CD4-positive, alpha-beta T cell (primary cell): ENCODE measurements at regions of chr20 and their contacts with region 1.

Region 1: DNA sequence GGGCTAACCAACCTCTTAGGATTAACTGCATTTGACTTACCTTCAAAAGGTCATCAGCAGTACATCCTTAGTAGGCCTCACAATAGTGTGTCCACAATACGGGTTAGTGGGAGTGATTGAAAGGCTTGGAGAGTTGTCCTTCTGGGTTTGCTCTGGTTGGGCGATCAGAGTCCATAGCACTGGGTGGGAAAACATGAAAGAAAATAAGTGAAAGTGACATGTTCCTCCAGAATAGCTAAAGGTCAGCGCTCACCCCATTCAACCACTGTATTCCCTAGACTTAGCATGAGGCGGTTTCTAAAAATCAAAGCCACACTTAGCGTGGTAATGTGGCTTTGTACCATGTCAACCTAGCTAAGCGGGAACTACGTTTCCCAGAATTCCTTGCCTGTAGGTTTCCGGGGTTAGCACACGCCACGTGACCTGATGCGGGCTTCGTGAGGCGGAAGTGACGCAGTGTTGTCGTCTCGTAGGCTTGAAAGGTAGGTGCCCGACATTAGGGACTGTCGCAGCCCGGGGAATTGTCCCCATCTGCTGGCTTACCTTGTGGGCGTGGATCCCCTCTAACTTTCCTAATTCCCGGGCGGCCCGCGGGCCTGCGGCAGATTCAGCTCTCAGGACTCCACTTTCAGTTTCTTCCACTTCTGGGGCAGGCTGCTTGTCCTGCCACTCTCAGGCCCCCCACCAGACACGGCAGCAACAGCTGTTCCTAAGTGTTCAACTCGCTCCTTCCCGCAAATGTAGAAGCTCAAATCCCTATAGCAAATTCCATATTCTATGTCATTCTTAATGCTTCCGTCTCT is 19.8 kb upstream of the SCP2D1 start:
- DNase-seq: peak; percentile 75 to 98 (median 82)
- ATAC-seq: peak; percentile 96
- H3K4me3 ChIP-seq: peak overlapping the region; percentile 75
- H3K4me3 Mint-ChIP-seq: peak overlapping the region; percentile 92
- H3K27ac ChIP-seq: peak overlapping the region; percentile 85 to 93
- H3K27ac Mint-ChIP-seq: peak overlapping the region; percentile 100
- H3K4me1 ChIP-seq: peaks cover 11% of the 10 kb centered on the region
- H3K4me1 Mint-ChIP-seq: peaks cover 28% of the 10 kb centered on the region
- H3K27me3 ChIP-seq: peaks cover 0 to 13% of the 10 kb centered on the region in 2 experiments
- H3K27me3 Mint-ChIP-seq: peaks cover 40% of the 10 kb centered on the region
- CTCF ChIP-seq: no peak

Region 2: DNA sequence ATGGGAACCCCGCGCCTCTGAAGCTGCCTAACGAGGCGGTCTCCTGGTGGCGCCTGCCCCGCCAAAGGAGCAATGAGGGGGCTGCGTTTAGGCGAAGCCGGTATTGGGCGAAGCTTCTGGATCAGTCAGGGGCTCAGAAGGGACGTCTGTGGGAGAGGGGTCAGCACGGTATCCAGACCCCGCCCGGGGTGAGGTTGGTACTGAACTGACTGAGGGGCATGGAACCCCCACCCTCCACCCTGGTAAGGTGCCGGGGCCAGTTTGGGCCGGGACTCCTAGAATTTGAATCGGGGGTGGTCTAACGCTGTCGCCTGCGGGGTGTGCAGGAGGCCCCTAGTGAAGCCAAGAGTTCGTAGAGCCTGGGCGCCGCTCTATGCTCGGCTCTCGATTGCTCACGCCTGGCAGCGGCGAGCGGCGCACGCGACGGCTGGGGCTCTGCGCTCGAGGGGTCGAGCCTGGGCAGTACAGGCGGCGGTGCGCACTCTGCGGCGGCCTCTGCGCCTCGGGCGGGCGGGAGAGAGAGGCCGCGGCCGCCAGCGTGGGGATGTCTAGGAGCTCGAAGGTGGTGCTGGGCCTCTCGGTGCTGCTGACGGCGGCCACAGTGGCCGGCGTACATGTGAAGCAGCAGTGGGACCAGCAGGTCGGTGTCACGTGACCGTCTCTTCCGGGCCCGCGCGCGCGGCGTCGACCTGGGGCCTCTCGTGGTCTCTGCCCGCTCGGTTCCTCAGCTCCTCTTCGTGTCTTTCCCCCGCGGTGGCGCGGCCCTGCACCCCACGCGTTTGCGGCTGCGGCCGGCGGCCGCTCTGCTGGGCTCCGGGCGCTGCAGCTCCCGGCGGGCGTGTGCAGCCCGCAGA is 656.2 kb before region 1 on chr20 and contains the starts of genes KAT14 and PET117:
- CTCF ChIA-PET with region 1: no interaction called
- POLR2A ChIA-PET with region 1: interaction called, 11 read pairs
- intact Hi-C with region 1: loop called in 1 of 2 experiments (anchors 5 kb)
- DNase-seq: peak; percentile 83 to 96 (median 91)
- ATAC-seq: peak; percentile 92
- H3K4me3 ChIP-seq: peak within 1 kb of the TSS; percentile 81
- H3K4me3 Mint-ChIP-seq: peak within 1 kb of the TSS; percentile 96
- H3K27ac ChIP-seq: peak within 1 kb of the TSS; percentile 72 to 75
- H3K27ac Mint-ChIP-seq: peak within 1 kb of the TSS; percentile 95
- H3K4me1 ChIP-seq: peaks cover 32% of the 10 kb centered on the region
- H3K4me1 Mint-ChIP-seq: peaks cover 32% of the 10 kb centered on the region
- H3K27me3 ChIP-seq: no peaks in the 10 kb centered on the region
- H3K27me3 Mint-ChIP-seq: no peaks in the 10 kb centered on the region
- CTCF ChIP-seq: no peak
- total RNA-seq, gene KAT14: 8.5 to 9.4 TPM
- total RNA-seq, gene PET117: 13.6 to 14.6 TPM

Region 3: GRCh38 chr20:18507218-18508021 is 286.4 kb before region 1 on chr20 and contains the start of gene SEC23B:
- CTCF ChIA-PET with region 1: no interaction called
- POLR2A ChIA-PET with region 1: interaction called, 26 read pairs
- intact Hi-C with region 1: loop called (anchors 2 to 5 kb)
- DNase-seq: peak; percentile 94 to 99 (median 98)
- ATAC-seq: peak; percentile 81
- H3K4me3 ChIP-seq: peak within 1 kb of the TSS; percentile 86
- H3K4me3 Mint-ChIP-seq: peak within 1 kb of the TSS; percentile 98
- H3K27ac ChIP-seq: peak within 1 kb of the TSS; percentile 94 to 99
- H3K27ac Mint-ChIP-seq: peak within 1 kb of the TSS; percentile 100
- H3K4me1 ChIP-seq: peaks cover 26% of the 10 kb centered on the region
- H3K4me1 Mint-ChIP-seq: peaks cover 52% of the 10 kb centered on the region
- H3K27me3 ChIP-seq: peaks cover 0 to 2% of the 10 kb centered on the region in 2 experiments
- H3K27me3 Mint-ChIP-seq: no peaks in the 10 kb centered on the region
- CTCF ChIP-seq: no peak
- total RNA-seq, gene SEC23B: 29.2 to 32.8 TPM

Region 4: GRCh38 chr20:18694071-18694470 is 99.8 kb before region 1 on chr20:
- CTCF ChIA-PET with region 1: no interaction called
- POLR2A ChIA-PET with region 1: no interaction called
- intact Hi-C with region 1: no loop called
- DNase-seq: no peak
- ATAC-seq: no peak
- H3K4me3 ChIP-seq: no peak overlapping the region
- H3K4me3 Mint-ChIP-seq: no peak overlapping the region
- H3K27ac ChIP-seq: no peak overlapping the region
- H3K27ac Mint-ChIP-seq: no peak overlapping the region
- H3K4me1 ChIP-seq: no peaks in the 10 kb centered on the region
- H3K4me1 Mint-ChIP-seq: no peaks in the 10 kb centered on the region
- H3K27me3 ChIP-seq: no peaks in the 10 kb centered on the region
- H3K27me3 Mint-ChIP-seq: no peaks in the 10 kb centered on the region
- CTCF ChIP-seq: no peak

Region 5: DNA sequence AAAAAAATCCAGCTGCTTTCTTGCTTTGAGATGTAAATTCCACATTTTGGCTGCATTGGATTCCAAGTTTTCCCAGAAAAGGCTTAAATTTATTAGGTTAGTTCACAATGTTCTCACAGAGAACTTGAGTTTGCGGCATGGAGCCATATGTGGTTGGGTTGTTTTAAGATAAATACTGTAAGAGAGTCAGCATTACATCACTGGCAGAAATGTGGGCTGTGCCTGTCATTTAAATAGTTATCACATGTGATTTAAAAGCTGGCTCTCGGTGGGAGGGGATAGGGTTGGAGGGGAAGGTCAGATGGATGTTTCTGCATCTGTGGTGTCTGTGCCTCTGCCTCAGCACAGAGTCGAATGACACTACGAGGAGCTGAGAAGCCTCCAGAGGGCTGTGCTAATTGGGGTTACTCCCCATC is 54.1 kb before region 1 on chr20:
- CTCF ChIA-PET with region 1: no interaction called
- POLR2A ChIA-PET with region 1: no interaction called
- intact Hi-C with region 1: no loop called
- DNase-seq: no peak
- ATAC-seq: no peak
- H3K4me3 ChIP-seq: no peak overlapping the region
- H3K4me3 Mint-ChIP-seq: no peak overlapping the region
- H3K27ac ChIP-seq: no peak overlapping the region
- H3K27ac Mint-ChIP-seq: no peak overlapping the region
- H3K4me1 ChIP-seq: peaks cover 24% of the 10 kb centered on the region
- H3K4me1 Mint-ChIP-seq: peaks cover 7% of the 10 kb centered on the region
- H3K27me3 ChIP-seq: no peaks in the 10 kb centered on the region
- H3K27me3 Mint-ChIP-seq: no peaks in the 10 kb centered on the region
- CTCF ChIP-seq: no peak

Region 6: DNA sequence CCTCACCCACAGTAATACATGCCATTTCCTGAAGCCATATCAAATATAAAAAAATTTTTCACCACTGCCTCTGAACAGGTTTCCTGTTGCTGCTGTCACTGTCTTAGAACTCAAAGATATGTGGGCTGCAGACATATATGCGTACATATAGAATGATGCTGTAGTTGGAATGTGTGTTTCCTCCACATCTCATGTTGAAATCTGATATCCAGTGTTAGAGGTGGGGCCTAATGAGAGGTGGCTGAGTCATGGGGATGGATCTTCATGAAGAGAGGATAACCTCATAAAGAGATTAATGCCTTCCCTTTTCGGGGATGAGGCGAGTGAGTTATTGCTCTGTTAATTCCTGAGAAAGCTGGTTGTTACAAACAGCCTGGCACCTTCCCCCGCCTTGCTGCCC is 12.1 kb after region 1 on chr20:
- CTCF ChIA-PET with region 1: interaction called, 3 read pairs
- POLR2A ChIA-PET with region 1: interaction called, 10 read pairs
- intact Hi-C with region 1: no loop called
- DNase-seq: peak in 2 of 14 experiments; percentile 5 to 7
- ATAC-seq: peak; percentile 89
- H3K4me3 ChIP-seq: no peak overlapping the region
- H3K4me3 Mint-ChIP-seq: peak overlapping the region; percentile 0
- H3K27ac ChIP-seq: no peak overlapping the region
- H3K27ac Mint-ChIP-seq: peak overlapping the region; percentile 80
- H3K4me1 ChIP-seq: peaks cover 2% of the 10 kb centered on the region
- H3K4me1 Mint-ChIP-seq: peaks cover 16% of the 10 kb centered on the region
- H3K27me3 ChIP-seq: peaks cover 0 to 8% of the 10 kb centered on the region in 2 experiments
- H3K27me3 Mint-ChIP-seq: peaks cover 5% of the 10 kb centered on the region
- CTCF ChIP-seq: no peak

Region 7: GRCh38 chr20:18879262-18879661 is 85.4 kb after region 1 on chr20:
- CTCF ChIA-PET with region 1: no interaction called
- POLR2A ChIA-PET with region 1: no interaction called
- intact Hi-C with region 1: no loop called
- DNase-seq: no peak
- ATAC-seq: no peak
- H3K4me3 ChIP-seq: no peak overlapping the region
- H3K4me3 Mint-ChIP-seq: no peak overlapping the region
- H3K27ac ChIP-seq: no peak overlapping the region
- H3K27ac Mint-ChIP-seq: no peak overlapping the region
- H3K4me1 ChIP-seq: no peaks in the 10 kb centered on the region
- H3K4me1 Mint-ChIP-seq: no peaks in the 10 kb centered on the region
- H3K27me3 ChIP-seq: no peaks in the 10 kb centered on the region
- H3K27me3 Mint-ChIP-seq: peaks cover 29% of the 10 kb centered on the region
- CTCF ChIP-seq: no peak